ENCODE measurements at regions of chr18 and their contacts with region 1.

Region 1: GRCh38 chr18:22694954-22695353 is 238.2 kb upstream of the RBBP8 start:
- DNase-seq: no peak
- ATAC-seq: no peak
- H3K4me3 Mint-ChIP-seq: no peak overlapping the region
- H3K27ac Mint-ChIP-seq: no peak overlapping the region
- H3K4me1 Mint-ChIP-seq: no peaks in the 10 kb centered on the region
- H3K27me3 Mint-ChIP-seq: peaks cover 6% of the 10 kb centered on the region
- CTCF ChIP-seq: no peak

Region 2: DNA sequence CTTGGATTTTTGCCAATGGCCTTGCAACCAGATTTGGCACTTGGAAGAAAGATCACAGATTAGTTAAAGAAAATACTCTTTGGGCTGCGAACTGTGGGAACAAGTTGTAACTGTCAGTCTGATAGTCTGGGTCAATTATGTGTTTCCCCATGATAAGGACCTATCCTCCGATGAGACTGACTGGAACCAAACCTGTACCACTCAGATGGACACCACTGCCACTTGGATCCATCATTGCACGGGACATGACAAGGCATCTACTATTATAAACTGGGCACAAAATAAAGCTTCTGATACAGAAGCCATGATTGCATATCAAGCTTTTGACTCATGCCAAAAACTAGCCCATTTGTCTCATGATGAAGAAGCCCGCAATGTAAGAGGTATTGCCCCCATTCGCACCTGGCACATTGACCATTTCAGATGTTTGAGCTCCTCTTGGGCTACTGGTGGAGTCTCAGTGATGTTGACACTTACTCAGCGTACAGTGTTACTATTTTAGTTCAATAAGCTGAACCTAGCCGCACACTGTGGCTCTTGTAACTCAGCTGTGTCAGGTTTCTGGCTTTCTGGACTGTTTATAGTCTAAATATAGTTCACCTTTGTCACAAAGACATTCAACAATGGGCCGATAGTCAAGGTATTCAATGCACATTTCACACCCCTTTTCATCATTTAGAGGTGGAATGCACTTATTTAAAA is 58.3 kb after region 1 on chr18:
- CTCF ChIA-PET with region 1: no interaction called
- POLR2A ChIA-PET with region 1: no interaction called
- intact Hi-C with region 1: loop called (anchors 10 kb)
- DNase-seq: no peak
- ATAC-seq: no peak
- H3K4me3 Mint-ChIP-seq: no peak overlapping the region
- H3K27ac Mint-ChIP-seq: no peak overlapping the region
- H3K4me1 Mint-ChIP-seq: no peaks in the 10 kb centered on the region
- H3K27me3 Mint-ChIP-seq: peaks cover 20% of the 10 kb centered on the region
- CTCF ChIP-seq: no peak

Measured in activated CD8-positive, alpha-beta T cell treated with anti-CD3 and anti-CD28 coated beads for 36 hours (primary cell).